Head of caudate nucleus (tissue), 42 donors: ENCODE measurements at regions of chr18 and their contacts with region 1.

Region 1: GRCh38 chr18:13836559-13836958 is 12.6 kb downstream of the MC5R start:
- DNase-seq: no peak

Region 2: GRCh38 chr18:13302457-13303225 is 533.9 kb before region 1 on chr18:
- intact Hi-C with region 1: no loop called
- DNase-seq: no peak

Region 3: DNA sequence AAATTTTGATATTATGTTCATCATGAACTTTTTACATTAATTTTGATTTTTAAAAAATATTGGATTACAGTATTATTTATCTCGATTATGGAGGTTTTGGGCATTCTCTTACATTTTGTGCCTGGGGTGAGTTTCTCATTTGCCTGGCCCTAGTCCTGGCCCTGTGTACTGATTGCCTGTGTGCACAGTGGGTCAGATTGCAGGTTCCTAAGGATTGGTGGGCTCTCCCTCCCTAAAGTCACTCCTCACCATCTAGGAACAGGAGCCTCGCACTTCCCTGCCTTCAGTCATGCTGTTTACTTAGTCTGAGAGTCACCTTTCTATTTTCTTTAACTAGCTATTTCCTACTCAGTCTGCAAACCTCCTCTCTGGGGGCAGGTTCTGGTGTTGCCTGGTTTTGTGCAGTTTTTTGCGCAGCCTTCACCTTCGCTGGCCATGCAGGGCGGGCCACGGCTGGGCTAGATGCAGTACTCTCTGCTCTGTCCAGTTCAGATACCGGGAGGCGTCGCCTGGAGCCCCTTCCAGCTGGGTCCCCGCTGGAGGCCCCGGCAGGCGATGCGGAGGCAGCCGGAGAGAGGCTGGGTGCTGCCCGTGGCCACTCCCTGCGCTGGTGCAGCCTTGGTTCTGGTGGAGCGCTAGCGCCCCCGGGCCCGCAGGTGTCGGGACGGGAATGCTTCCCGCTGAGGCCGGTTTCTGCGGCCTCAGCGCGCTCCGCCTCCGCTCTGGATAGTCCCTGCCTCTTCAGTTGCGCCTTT is 35.9 kb before region 1 on chr18:
- intact Hi-C with region 1: no loop called
- DNase-seq: peak; percentile 40 to 89 (median 79)

Region 4: GRCh38 chr18:13893418-13893760 is 56.8 kb after region 1 on chr18:
- intact Hi-C with region 1: loop called (anchors 5 kb)
- DNase-seq: no peak

Region 5: DNA sequence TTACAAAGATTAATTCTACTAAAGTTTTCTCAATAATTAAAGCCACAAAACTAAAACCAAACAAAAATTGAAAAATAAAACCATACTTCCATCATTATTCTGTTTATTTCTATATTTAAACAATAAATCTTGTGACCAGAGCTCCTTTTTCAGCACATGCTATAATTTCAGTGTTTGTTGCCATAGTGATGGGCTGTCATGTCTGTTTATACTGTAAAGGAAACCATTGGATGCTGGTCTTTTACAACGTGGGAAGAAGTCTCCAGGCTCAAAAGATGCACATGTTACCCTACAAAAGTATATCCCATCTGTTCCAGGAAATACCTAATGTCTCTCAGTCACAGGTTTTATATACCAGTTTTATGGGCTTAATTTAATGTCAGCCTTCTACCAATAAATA is 178.9 kb after region 1 on chr18:
- intact Hi-C with region 1: no loop called
- DNase-seq: no peak